Left lung (tissue), 14 donors: ENCODE measurements at regions of chr16 and their contacts with region 1.

Region 1: GRCh38 chr16:77236063-77236511 is 36.9 kb downstream of the SYCE1L start:
- DNase-seq: peak; percentile 82 to 92 (median 89)
- ATAC-seq: peak; percentile 100
- H3K4me3 ChIP-seq: no peak overlapping the region
- H3K27ac ChIP-seq: no peak overlapping the region
- H3K4me1 ChIP-seq: peaks cover 3 to 6% of the 10 kb centered on the region in 2 donors
- H3K27me3 ChIP-seq: peaks cover 0 to 39% of the 10 kb centered on the region in 2 donors
- CTCF ChIP-seq: peak; percentile 96 to 99

Region 2: GRCh38 chr16:76943877-76944276 is 292.2 kb before region 1 on chr16:
- intact Hi-C with region 1: no loop called
- DNase-seq: no peak
- ATAC-seq: no peak
- H3K4me3 ChIP-seq: no peak overlapping the region
- H3K27ac ChIP-seq: no peak overlapping the region
- H3K4me1 ChIP-seq: no peaks in the 10 kb centered on the region
- H3K27me3 ChIP-seq: no peaks in the 10 kb centered on the region
- CTCF ChIP-seq: no peak

Region 3: DNA sequence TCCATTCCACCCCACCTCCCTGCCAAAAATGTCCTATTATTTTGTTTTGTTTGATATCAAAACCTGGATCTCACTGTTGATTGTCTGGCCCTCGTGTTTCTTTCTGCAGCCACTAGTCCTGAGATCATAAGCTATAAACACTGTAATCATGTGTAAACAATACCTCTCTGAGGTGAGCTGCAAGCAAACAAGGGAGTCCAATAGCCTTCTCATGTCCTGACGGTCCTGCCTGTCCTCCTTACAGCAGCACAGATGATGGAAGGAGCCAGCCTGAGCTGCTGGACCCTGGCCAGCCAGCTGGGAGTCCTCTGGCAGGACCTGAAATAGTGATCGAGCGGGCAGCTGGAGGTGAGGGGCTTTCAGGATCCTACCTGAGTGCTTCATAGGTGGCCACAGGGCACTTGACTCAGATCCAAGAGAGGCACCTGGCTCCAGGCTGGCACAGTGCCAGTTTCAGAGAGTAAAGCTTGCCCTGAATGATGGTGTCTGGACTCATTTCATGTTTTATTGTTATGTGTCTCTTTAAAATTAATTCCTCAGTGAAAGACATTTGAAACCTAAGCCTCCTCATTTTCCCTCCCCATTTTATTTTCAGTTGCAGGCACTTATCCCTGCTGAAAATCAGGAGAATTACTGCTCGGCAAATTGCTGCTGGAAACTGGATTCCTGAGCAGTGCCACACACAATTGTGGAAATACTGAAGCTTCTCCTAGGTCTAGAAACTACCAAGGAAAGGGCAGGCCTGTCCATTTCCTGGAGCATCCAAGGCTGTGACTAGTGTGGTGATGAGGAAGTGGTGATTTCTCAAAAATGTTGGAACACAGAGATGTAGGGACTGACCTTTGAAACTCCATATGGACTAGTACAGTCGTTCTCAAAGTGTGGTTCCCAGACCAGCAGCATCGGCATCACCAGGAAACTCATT is 214.7 kb after region 1 on chr16:
- intact Hi-C with region 1: no loop called
- DNase-seq: no peak
- ATAC-seq: no peak
- H3K4me3 ChIP-seq: no peak overlapping the region
- H3K27ac ChIP-seq: no peak overlapping the region
- H3K4me1 ChIP-seq: no peaks in the 10 kb centered on the region
- H3K27me3 ChIP-seq: no peaks in the 10 kb centered on the region
- CTCF ChIP-seq: no peak

Region 4: GRCh38 chr16:77584205-77584859 is 348.2 kb after region 1 on chr16:
- intact Hi-C with region 1: loop called in 1 of 2 experiments (anchors 5 kb)
- DNase-seq: peak in 2 of 4 donors; percentile 42 to 72
- ATAC-seq: peak; percentile 89
- H3K4me3 ChIP-seq: no peak overlapping the region
- H3K27ac ChIP-seq: no peak overlapping the region
- H3K4me1 ChIP-seq: no peaks in the 10 kb centered on the region
- H3K27me3 ChIP-seq: peaks cover 0 to 5% of the 10 kb centered on the region in 2 donors
- CTCF ChIP-seq: peak; percentile 83 to 89

Region 5: GRCh38 chr16:77898671-77899211 is 662.7 kb after region 1 on chr16:
- intact Hi-C with region 1: no loop called
- DNase-seq: no peak
- ATAC-seq: no peak
- H3K4me3 ChIP-seq: no peak overlapping the region
- H3K27ac ChIP-seq: no peak overlapping the region
- H3K4me1 ChIP-seq: no peaks in the 10 kb centered on the region
- H3K27me3 ChIP-seq: no peaks in the 10 kb centered on the region
- CTCF ChIP-seq: no peak

Region 6: DNA sequence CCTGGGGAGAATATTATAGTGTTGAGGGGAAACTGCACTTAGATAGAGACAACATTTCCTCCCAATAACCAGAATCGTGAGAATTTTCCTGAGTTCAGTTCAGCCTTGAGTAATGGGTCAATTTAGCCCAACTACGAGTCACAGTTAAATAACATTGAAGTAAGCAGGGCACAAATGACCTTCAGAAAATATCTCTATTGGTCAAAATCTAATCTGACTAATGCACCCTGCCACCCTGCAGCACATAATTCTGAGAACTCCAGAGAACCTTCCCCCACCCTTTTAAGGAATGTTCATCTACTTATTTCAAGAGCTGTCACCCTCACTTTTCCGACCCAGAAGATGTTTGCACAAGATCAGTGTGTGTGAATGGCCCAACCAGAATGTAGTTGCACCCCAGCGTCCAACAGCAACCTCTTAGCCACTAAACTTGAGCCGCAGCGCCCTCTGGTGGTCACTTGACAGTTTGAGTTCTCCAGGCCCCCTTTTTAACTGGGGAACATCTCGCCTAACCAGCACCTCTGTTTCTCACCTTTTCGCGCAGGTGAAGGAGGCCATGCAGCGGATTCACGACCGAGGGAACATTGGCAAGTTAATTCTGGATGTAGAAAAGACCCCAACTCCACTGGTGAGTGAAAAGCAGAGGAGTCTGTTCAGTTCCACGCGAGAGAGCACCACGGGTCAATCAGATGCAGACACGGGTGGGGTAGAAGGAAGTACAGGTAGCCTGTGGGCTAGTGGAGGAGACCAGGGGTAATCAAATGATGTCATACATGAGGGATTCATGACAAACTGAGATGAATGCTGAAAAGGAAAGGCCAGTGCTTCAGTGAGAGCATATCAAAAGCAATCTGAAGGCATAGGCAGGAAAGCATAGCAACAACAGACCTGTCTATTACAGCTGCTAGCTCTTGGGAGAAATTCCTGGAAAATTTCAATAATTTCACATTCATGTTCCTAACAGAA is 735.5 kb after region 1 on chr16:
- intact Hi-C with region 1: loop called in 1 of 2 experiments (anchors 10 kb)
- DNase-seq: peak; percentile 61 to 91 (median 82)
- ATAC-seq: peak; percentile 99
- H3K4me3 ChIP-seq: no peak overlapping the region
- H3K27ac ChIP-seq: no peak overlapping the region
- H3K4me1 ChIP-seq: no peaks in the 10 kb centered on the region
- H3K27me3 ChIP-seq: peaks cover 0 to 26% of the 10 kb centered on the region in 2 donors
- CTCF ChIP-seq: peak; percentile 64 to 74